ENCODE measurements at regions of chr3 and their contacts with region 1.

Region 1: DNA sequence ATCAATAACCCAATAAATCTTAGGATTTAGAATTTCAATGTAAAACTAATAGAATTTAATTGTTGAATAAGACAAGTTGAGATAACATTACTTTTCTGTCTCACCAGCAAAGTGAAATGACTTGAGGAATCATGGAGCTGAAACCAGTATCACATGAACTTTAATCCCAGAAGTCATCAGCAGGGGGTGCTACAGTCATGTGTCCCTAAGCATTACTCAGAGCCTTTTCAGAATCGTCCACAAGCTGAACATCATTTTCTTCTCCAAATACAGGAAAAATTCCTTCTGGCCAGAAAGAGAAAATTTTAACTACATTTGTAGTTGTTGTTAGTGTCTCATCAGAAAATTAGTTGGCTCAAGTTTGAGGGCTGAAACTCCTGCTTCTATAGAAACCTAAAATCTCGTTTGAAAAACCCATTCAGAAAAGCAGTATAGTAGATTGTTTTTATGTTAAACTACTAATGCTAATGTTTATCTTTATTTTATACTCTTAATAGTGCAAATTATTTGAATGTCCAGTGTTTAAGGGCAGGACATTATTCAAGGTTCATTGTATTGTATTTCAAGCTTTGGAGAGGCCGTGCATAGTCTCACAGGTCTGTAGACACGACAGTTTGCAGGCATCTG is 384.1 kb downstream of the PLOD2 start:
- DNase-seq: peak; percentile 67
- H3K4me3 ChIP-seq: no peak overlapping the region
- CTCF ChIP-seq: peak; percentile 73

Region 2: GRCh38 chr3:146189519-146190173 is 412.8 kb after region 1 on chr3:
- in situ Hi-C with region 1: loop called (anchors 10 kb)
- DNase-seq: peak; percentile 41
- H3K4me3 ChIP-seq: no peak overlapping the region
- CTCF ChIP-seq: peak; percentile 73